ENCODE measurements at regions of chr19 and their contacts with region 1.

Region 1: GRCh38 chr19:43784981-43785808 is 4.4 kb upstream of the KCNN4 start:
- DNase-seq: peak; percentile 79
- ATAC-seq: peak; percentile 51
- H3K4me3 ChIP-seq: peak overlapping the region; percentile 18 to 47
- H3K27ac ChIP-seq: peak overlapping the region; percentile 94
- H3K4me1 ChIP-seq: peaks cover 44 to 57% of the 10 kb centered on the region in 2 experiments
- H3K27me3 ChIP-seq: no peaks in the 10 kb centered on the region
- CTCF ChIP-seq: peak; percentile 92 to 99 (median 98); a peak in 5 of 6 replicates
- POLR2A ChIP-seq: no peak
- RAD21 ChIP-seq: peak; percentile 97

Region 2: DNA sequence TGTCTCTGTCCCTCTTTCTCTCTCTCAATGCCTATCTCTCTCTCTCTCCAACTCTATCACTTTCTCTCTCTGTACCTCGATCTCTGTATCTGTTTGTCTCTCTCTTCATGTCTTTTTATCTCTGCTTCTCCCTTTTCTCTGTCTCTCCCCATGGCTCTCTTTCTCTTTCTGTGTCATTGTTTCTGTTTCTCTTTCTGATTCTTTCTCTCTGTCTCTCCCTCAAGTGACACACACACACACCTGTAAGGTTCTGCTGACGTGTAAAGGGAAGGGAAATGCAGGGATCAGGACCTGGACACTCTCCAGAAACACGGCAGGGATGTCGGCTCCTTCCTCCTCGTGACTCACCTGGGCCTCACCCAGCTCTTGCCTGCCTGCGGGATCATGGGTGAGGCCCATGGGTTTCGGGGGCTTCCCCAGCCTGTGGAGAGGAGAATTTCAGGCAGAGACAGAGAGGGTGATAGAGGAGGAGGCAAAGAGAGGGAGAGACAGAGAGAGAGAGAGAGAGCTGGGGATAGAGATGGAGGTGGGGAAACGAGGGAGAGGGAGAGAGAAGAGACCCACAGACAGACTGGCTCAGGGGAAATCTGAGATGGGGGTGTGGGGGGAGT is 109.8 kb before region 1 on chr19:
- CTCF ChIA-PET with region 1: no interaction called
- POLR2A ChIA-PET with region 1: no interaction called
- RAD21 ChIA-PET with region 1: interaction called in 1 of 2 experiments, 4 read pairs
- intact Hi-C with region 1: loop called (anchors 10 kb)
- DNase-seq: peak; percentile 92
- ATAC-seq: peak; percentile 89
- H3K4me3 ChIP-seq: peak overlapping the region in 1 of 2 experiments; percentile 34; a peak in 3 of 4 replicates
- H3K27ac ChIP-seq: peak overlapping the region; percentile 72
- H3K4me1 ChIP-seq: peaks cover 37 to 69% of the 10 kb centered on the region in 2 experiments
- H3K27me3 ChIP-seq: no peaks in the 10 kb centered on the region
- CTCF ChIP-seq: no peak
- POLR2A ChIP-seq: no peak
- RAD21 ChIP-seq: no peak

Region 3: DNA sequence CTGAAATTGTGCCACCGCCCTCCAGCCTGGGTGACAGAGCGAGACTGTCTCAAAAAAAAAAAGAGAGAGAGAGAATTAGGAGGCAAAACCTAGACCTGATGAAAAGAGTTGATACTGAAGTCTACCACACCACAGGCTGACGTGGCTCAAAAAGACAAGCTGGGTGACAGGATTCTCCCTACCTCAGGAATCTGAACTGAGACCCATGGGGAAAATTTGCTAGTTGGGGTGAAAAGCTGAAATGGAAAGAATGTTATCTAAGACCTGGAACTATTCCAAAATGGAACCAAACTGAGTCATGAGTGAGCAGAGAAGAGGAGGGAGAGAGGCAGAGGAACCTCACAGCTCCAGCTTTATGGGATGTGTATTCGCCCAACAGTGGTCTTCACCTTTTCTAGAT is 42.2 kb before region 1 on chr19:
- CTCF ChIA-PET with region 1: interaction called, 34 read pairs
- POLR2A ChIA-PET with region 1: interaction called, 6 read pairs
- RAD21 ChIA-PET with region 1: interaction called, 9 read pairs
- intact Hi-C with region 1: loop called (anchors 1 kb)
- DNase-seq: no peak
- ATAC-seq: no peak
- H3K4me3 ChIP-seq: no peak overlapping the region
- H3K27ac ChIP-seq: no peak overlapping the region
- H3K4me1 ChIP-seq: peaks cover 20 to 26% of the 10 kb centered on the region in 2 experiments
- H3K27me3 ChIP-seq: no peaks in the 10 kb centered on the region
- CTCF ChIP-seq: no peak
- POLR2A ChIP-seq: no peak
- RAD21 ChIP-seq: no peak

Region 4: GRCh38 chr19:43765109-43765876 is 19.9 kb before region 1 on chr19:
- CTCF ChIA-PET with region 1: interaction called, 38 read pairs
- POLR2A ChIA-PET with region 1: interaction called, 4 read pairs
- RAD21 ChIA-PET with region 1: interaction called in 1 of 2 experiments, 6 read pairs
- intact Hi-C with region 1: loop called (anchors 1 kb)
- DNase-seq: peak; percentile 93
- ATAC-seq: peak; percentile 80
- H3K4me3 ChIP-seq: peak overlapping the region in 1 of 2 experiments; percentile 12; a peak in 2 of 4 replicates
- H3K27ac ChIP-seq: peak overlapping the region; percentile 98
- H3K4me1 ChIP-seq: peaks cover 67 to 84% of the 10 kb centered on the region in 2 experiments
- H3K27me3 ChIP-seq: no peaks in the 10 kb centered on the region
- CTCF ChIP-seq: no peak
- POLR2A ChIP-seq: no peak
- RAD21 ChIP-seq: peak; percentile 42

Region 5: GRCh38 chr19:43802229-43802951 is 17.2 kb after region 1 on chr19 and contains the start of gene LYPD5:
- CTCF ChIA-PET with region 1: no interaction called
- POLR2A ChIA-PET with region 1: no interaction called
- RAD21 ChIA-PET with region 1: no interaction called
- intact Hi-C with region 1: no loop called
- DNase-seq: no peak
- ATAC-seq: no peak
- H3K4me3 ChIP-seq: no peak within 1 kb of the TSS
- H3K27ac ChIP-seq: no peak within 1 kb of the TSS
- H3K4me1 ChIP-seq: peaks cover 18 to 29% of the 10 kb centered on the region in 2 experiments
- H3K27me3 ChIP-seq: no peaks in the 10 kb centered on the region
- CTCF ChIP-seq: no peak
- POLR2A ChIP-seq: no peak
- RAD21 ChIP-seq: no peak
- total RNA-seq, gene LYPD5: 7.6 TPM